HepG2 (cell line): ENCODE measurements at regions of chr16 and their contacts with region 1.

Region 1: DNA sequence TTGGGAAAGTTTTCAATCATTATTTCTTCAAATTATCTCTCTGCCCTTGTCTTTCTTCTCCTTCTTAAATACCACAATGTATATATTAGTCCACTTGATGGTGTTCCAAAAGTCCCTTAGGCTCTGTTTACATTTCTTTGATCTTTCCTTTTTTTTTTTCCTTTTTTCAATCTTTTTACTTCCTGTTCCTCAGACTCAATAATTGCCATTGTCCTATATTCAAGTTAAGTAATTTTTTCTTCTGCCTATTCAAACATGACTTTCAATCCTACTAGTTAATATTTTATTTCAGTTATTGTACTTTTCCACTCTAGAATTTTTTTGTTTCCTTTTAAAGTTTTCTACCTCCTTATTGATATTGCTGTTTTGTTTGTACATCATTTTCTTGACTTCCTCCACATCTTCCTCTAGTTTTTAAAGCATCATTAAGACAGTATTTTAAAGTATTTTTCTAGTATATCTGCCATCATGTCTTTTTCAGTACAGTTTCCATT is 15.8 kb upstream of the UQCRC2 start:
- DNase-seq: peak; percentile 97
- ATAC-seq: peak; percentile 76
- H3K4me3 ChIP-seq: peak overlapping the region in 2 of 3 experiments; percentile 18 to 52; a peak in 3 of 6 replicates
- H3K27ac ChIP-seq: peak overlapping the region; percentile 93
- H3K4me1 ChIP-seq: peaks cover 68% of the 10 kb centered on the region
- H3K27me3 ChIP-seq: no peaks in the 10 kb centered on the region
- CTCF ChIP-seq: no peak
- EP300 ChIP-seq: peak; percentile 74 to 98; a peak in 3 of 4 replicates
- POLR2A ChIP-seq: no peak
- RAD21 ChIP-seq: no peak

Region 2: DNA sequence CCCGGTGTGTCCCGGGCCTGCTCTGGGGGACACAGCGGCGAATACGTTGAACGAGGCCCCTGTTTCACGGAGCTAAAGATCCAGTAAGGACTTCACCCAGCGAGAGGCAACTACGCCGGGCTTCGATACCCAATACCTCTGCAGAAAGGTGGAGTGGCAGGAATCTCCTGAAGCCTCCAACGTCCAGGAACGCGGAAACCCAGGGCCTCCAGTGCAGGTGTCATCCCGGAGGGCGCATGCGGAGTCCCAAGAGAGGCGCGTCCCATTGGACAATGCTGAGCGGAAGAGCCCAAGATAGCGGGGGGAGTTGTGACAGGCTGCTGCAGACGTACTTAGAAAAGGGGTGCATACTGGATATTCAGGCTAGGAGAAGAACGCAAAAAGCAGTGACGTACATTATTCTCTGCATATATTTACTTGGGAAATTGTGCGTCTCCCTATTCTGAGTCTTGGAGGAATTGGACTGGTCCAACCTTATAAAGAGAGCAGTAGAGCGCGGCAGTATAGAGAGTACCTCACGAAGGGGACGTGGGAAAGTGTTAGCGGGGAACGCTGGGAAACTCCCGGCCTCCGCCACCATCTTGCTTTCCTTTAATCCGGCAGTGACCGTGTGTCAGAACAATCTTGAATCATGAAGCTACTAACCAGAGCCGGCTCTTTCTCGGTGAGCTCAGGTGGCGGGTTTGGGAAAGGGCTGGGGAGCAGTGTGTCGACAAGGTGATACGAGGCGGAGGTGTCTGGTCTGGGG is 15.6 kb after region 1 on chr16 and contains the start of gene UQCRC2:
- CTCF ChIA-PET with region 1: interaction called, 3 read pairs
- POLR2A ChIA-PET with region 1: interaction called, 10 read pairs
- in situ Hi-C with region 1: no loop called
- intact Hi-C with region 1: loop called (anchors 1 kb)
- DNase-seq: peak; percentile 97
- ATAC-seq: peak; percentile 97
- H3K4me3 ChIP-seq: peak within 1 kb of the TSS; percentile 78 to 98 (median 84)
- H3K27ac ChIP-seq: peak within 1 kb of the TSS; percentile 93
- H3K4me1 ChIP-seq: peaks cover 64% of the 10 kb centered on the region
- H3K27me3 ChIP-seq: peaks cover 0 to 4% of the 10 kb centered on the region in 2 experiments; a peak in 1 of 5 replicates
- CTCF ChIP-seq: no peak
- EP300 ChIP-seq: peak in 1 of 2 experiments; percentile 41; a peak in 3 of 4 replicates
- POLR2A ChIP-seq: peak; percentile 81 to 99
- RAD21 ChIP-seq: peak; percentile 30; the same call in 1 of the 2 replicates
- total RNA-seq, gene UQCRC2: 536 and 704 TPM in 2 replicates